ENCODE measurements at regions of chr7 and their contacts with region 1.

Region 1: GRCh38 chr7:42227936-42228591 is 8.9 kb downstream of the GLI3 start:
- DNase-seq: no peak
- ATAC-seq: no peak
- H3K4me3 ChIP-seq: no peak overlapping the region
- H3K27ac ChIP-seq: no peak overlapping the region
- H3K4me1 ChIP-seq: no peaks in the 10 kb centered on the region
- H3K27me3 ChIP-seq: no peaks in the 10 kb centered on the region; the same call in 1 of the 2 replicates
- CTCF ChIP-seq: no peak

Region 2: GRCh38 chr7:41927380-41927779 is 300.7 kb before region 1 on chr7:
- CTCF ChIA-PET with region 1: no interaction called
- POLR2A ChIA-PET with region 1: interaction called, 15 read pairs
- in situ Hi-C with region 1: no loop called
- intact Hi-C with region 1: no loop called
- DNase-seq: no peak
- ATAC-seq: no peak
- H3K4me3 ChIP-seq: no peak overlapping the region
- H3K27ac ChIP-seq: no peak overlapping the region
- H3K4me1 ChIP-seq: no peaks in the 10 kb centered on the region
- H3K27me3 ChIP-seq: no peaks in the 10 kb centered on the region
- CTCF ChIP-seq: no peak

Region 3: DNA sequence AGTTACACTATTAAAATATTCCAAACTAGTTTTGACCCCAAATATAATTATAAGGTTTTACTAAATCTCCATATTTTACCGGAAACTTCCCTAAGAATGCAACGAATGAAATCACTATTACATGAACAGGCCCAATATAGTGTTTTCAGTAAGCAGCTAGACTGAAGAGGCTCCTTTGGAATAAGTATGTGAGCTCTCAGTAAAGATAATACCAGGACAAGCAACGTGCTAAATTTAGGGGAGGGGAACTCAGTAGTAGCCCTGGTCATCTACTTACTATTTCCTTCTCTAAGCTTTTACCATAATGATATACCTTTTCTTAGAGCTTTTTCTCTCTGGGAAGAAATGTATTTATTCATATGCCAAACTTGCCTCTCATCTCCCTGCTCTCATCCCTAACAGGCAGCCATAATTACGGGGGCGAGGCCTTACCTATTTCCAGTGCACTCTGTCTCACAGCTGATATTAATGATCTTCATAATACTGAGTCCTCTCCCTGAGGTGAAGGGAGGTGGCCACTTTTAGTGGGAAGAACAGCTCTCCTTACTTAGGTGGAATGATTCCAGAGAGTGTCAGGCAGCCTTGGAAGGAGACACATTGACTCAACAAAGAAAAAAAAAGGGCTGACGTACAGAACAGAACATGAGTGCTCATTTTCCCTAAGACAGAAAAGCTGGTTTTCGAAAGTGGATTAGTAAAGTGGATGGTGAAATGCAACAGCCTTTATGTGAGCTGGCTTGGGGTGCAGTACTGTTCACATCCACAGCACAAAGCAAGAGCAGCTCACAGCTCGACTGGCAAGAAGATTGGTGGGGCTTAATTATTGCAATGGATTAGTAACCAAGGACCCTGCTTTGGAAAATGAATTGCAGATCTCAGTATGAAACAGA is 156.4 kb before region 1 on chr7:
- CTCF ChIA-PET with region 1: no interaction called
- POLR2A ChIA-PET with region 1: no interaction called
- in situ Hi-C with region 1: no loop called
- intact Hi-C with region 1: no loop called
- DNase-seq: no peak
- ATAC-seq: no peak; the same call in 1 of the 2 replicates
- H3K4me3 ChIP-seq: no peak overlapping the region
- H3K27ac ChIP-seq: no peak overlapping the region
- H3K4me1 ChIP-seq: no peaks in the 10 kb centered on the region
- H3K27me3 ChIP-seq: no peaks in the 10 kb centered on the region
- CTCF ChIP-seq: no peak

Region 4: DNA sequence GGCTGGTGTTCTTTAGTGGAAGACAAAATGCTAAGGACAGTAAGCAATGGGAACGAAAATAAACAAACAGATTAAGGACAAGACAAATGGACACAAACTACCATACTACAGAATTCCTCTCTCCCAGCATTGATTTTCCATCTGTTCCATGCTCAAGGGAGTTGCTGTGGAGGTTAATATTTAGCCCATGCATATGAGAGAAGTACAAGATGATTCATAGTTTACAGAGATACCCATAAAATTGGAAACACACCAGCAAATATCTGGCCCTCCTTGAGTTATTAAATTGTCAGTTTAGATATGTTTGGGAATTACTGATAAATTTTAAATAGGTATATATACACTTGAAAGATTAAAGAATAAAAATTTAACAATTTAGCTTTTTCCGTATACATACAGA is 60.9 kb before region 1 on chr7:
- CTCF ChIA-PET with region 1: no interaction called
- POLR2A ChIA-PET with region 1: interaction called, 24 read pairs
- in situ Hi-C with region 1: no loop called
- intact Hi-C with region 1: no loop called
- DNase-seq: no peak
- ATAC-seq: no peak
- H3K4me3 ChIP-seq: no peak overlapping the region
- H3K27ac ChIP-seq: no peak overlapping the region
- H3K4me1 ChIP-seq: no peaks in the 10 kb centered on the region
- H3K27me3 ChIP-seq: no peaks in the 10 kb centered on the region
- CTCF ChIP-seq: no peak